Activated CD8-positive, alpha-beta T cell treated with anti-CD3 and anti-CD28 coated beads for 36 hours (primary cell): ENCODE measurements at regions of chr10 and their contacts with region 1.

Region 1: DNA sequence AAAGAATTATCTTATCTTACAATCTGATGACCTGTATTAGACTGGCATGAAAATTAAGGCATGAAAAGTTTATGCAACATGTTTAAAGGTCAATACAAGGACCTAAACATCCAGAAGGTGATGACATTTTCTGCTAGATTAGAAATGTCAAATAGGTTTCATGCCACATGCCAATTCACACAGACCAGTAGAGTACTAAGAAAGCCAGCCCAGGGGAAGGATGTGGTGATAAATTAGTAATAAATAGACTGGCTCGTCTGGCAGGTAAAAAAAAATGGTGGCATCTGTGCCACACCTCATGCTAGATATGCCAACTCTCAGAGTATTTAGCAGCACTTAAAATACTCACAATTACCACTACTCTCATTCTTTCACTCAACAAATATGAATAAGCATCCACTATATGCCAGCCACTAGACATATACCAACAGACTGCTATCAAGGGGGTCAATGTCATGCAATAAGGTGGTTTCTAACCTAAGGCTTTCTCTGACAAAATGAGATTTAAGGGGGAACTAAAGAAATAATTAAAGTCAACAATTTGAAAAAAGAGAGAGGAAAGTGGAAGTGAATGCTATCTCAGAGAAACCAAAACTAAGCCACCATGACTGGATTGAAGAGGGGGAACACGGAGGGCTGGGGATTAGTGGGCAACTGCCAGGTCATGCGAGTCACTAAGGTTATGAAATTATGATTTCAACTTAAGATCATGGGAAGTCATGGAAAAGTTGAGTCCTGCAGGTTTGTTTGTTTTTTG is 83.5 kb downstream of the SGMS1 start:
- DNase-seq: peak; percentile 75
- ATAC-seq: peak; percentile 70
- H3K4me3 Mint-ChIP-seq: peak overlapping the region; percentile 51
- H3K27ac Mint-ChIP-seq: peak overlapping the region; percentile 91
- H3K4me1 Mint-ChIP-seq: peaks cover 87% of the 10 kb centered on the region
- H3K27me3 Mint-ChIP-seq: no peaks in the 10 kb centered on the region
- CTCF ChIP-seq: no peak

Region 2: GRCh38 chr10:50431791-50432190 is 108.5 kb before region 1 on chr10:
- CTCF ChIA-PET with region 1: no interaction called
- POLR2A ChIA-PET with region 1: no interaction called
- intact Hi-C with region 1: loop called (anchors 5 kb)
- DNase-seq: peak; percentile 54
- ATAC-seq: peak; percentile 77
- H3K4me3 Mint-ChIP-seq: peak overlapping the region; percentile 4
- H3K27ac Mint-ChIP-seq: peak overlapping the region; percentile 39
- H3K4me1 Mint-ChIP-seq: peaks cover 31% of the 10 kb centered on the region
- H3K27me3 Mint-ChIP-seq: no peaks in the 10 kb centered on the region
- CTCF ChIP-seq: no peak

Region 3: DNA sequence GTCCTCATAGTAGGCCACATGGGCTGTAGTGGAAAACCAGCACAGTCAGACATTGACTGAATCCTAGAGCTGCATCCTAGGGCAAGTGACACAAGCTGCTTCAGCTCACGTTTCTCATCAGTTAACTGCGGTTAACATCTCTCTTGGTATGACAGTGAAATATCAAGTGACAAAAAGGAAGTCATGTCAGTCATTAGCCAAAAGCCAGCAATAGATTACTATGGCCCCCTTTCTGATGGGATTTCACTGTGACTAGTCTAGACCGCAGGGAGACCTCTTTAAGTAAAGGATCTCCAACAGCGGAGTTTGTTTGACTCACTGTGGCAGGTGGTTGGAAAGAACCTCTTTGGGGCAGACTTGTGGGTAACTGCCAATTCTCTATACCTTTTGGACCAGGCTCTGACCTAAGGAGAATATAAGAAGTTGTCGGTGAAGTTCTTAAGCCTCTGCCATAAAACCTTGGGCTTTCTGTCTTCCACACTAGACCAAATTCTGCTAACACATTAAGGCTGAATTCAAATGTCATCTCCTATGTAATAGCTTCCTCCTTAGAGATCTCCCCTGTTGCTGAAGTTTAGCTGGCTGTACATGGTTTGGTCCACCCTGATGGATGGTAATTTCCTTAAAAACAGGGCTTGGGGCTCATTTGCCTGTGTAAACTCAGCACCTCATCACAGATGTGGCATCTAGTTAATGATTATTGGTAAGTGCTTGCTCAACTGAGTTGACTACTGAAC is 31.8 kb before region 1 on chr10:
- CTCF ChIA-PET with region 1: interaction called, 5 read pairs
- POLR2A ChIA-PET with region 1: interaction called, 5 read pairs
- intact Hi-C with region 1: loop called (anchors 2 kb)
- DNase-seq: peak; percentile 67
- ATAC-seq: peak; percentile 55
- H3K4me3 Mint-ChIP-seq: no peak overlapping the region
- H3K27ac Mint-ChIP-seq: peak overlapping the region; percentile 10
- H3K4me1 Mint-ChIP-seq: peaks cover 79% of the 10 kb centered on the region
- H3K27me3 Mint-ChIP-seq: no peaks in the 10 kb centered on the region
- CTCF ChIP-seq: no peak

Region 4: DNA sequence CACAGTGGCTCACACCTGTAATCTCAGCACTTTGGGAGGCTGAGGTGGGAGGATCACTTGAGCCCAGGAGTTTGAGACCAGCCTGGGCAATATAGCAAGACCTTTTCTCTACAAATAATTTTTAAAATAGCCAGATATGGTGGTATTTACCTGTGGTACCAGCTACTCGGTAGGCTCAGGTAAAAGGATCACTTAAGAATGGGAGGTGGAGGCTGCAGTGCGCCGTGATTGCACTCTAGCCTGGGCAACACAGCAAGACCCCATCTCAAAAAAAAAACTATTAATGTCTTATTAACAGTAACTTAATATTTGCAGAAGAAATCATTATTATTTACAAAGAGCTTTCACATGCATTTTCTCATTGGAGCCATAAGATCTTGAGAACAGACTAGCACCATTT is 20.1 kb before region 1 on chr10:
- CTCF ChIA-PET with region 1: no interaction called
- POLR2A ChIA-PET with region 1: no interaction called
- intact Hi-C with region 1: no loop called
- DNase-seq: no peak
- ATAC-seq: no peak
- H3K4me3 Mint-ChIP-seq: no peak overlapping the region
- H3K27ac Mint-ChIP-seq: no peak overlapping the region
- H3K4me1 Mint-ChIP-seq: peaks cover 26% of the 10 kb centered on the region
- H3K27me3 Mint-ChIP-seq: no peaks in the 10 kb centered on the region
- CTCF ChIP-seq: no peak

Region 5: DNA sequence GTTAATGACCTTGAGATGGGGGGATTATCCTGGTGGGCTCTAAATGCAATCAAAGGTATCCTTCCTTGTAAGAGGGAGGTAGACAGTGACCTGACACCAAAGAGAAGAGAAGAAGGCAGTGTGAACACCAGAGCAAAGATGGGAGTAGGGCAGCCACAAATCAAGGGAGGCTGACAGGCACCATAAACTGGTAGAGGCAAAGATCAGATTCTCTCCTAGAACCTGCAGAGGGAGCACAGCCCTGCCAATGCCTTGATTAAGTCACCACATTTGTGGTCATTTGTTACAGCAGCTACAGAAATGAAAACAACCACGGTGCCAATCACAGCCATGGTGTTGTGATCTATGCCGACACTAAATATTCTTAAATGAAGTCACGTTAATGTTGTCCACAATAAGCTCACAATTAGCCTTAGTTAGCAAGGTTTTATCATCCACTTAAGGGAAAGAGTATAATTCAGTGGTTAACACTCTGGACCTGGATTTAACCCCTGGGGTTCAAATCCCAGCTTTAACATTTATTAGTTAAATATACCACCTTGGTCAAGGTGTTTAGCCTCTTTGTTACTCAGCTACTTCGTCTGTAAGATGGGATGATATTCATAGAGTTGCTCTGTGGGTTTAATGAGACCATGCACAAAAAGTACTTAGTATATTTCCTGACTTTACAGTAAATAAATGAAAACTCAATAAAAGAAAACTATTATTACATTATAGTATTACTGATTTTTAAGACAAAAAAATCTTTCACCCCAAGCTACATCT is 12.7 kb after region 1 on chr10:
- CTCF ChIA-PET with region 1: interaction called, 12 read pairs
- POLR2A ChIA-PET with region 1: interaction called, 4 read pairs
- intact Hi-C with region 1: no loop called
- DNase-seq: peak; percentile 56
- ATAC-seq: peak; percentile 84
- H3K4me3 Mint-ChIP-seq: no peak overlapping the region
- H3K27ac Mint-ChIP-seq: no peak overlapping the region
- H3K4me1 Mint-ChIP-seq: peaks cover 24% of the 10 kb centered on the region
- H3K27me3 Mint-ChIP-seq: no peaks in the 10 kb centered on the region
- CTCF ChIP-seq: peak; percentile 23